Mammary epithelial cell (primary cell): ENCODE measurements at regions of chr17 and their contacts with region 1.

Region 1: DNA sequence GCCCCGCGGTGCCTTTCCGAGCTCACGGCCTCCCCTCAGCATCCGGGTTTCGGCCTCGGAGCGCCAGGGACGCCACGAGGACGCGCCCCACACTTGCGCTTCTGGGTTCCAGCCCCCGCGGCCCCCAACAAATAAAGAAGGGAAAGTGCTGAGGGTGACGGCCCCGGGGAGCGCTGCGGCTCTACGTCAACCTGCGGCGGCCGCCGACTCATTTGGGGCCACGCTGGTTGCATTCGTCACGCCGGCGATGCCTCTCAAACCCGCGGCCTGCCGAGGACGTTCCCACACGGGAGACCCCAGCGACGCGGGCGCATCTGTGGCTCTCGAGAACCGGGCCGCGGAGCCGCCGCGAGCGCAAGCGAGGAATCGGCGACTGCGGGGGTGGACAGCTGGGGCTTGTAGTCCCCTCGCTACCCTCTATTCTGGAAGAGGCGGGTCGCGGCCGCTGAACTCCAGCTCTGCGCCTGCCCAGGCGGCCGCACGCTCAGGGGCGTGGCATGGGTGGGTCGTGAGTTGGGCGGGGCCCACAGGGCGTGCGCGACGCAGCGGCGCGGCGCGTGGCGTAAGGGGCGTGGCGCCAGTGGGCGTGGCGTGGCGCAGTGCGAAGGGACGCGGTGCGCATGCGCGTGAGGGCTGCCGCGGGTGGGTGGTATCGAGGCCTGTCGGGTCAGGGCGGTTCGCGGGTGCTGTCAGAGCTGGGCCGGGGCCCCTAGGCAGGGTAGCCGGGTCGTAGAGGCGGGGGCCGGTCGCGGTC is at the start of gene AMZ2:
- DNase-seq: peak; percentile 91
- H3K4me3 ChIP-seq: peak within 1 kb of the TSS; percentile 67 to 93 (median 71)
- H3K27ac ChIP-seq: peak within 1 kb of the TSS; percentile 83
- H3K4me1 ChIP-seq: peaks cover 8% of the 10 kb centered on the region
- H3K27me3 ChIP-seq: no peaks in the 10 kb centered on the region
- CTCF ChIP-seq: no peak
- total RNA-seq, gene AMZ2: 96.4 to 124 TPM

Region 2: GRCh38 chr17:68205251-68205807 is 42.3 kb before region 1 on chr17:
- CTCF ChIA-PET with region 1: interaction called, 5 read pairs
- dilution Hi-C with region 1: no loop called
- in situ Hi-C with region 1: no loop called
- intact Hi-C with region 1: loop called (anchors 5 kb)
- DNase-seq: peak; percentile 76
- H3K4me3 ChIP-seq: peak overlapping the region; percentile 73 to 93 (median 82)
- H3K27ac ChIP-seq: peak overlapping the region; percentile 29
- H3K4me1 ChIP-seq: peaks cover 13% of the 10 kb centered on the region
- H3K27me3 ChIP-seq: no peaks in the 10 kb centered on the region
- CTCF ChIP-seq: peak; percentile 66 to 80

Region 3: DNA sequence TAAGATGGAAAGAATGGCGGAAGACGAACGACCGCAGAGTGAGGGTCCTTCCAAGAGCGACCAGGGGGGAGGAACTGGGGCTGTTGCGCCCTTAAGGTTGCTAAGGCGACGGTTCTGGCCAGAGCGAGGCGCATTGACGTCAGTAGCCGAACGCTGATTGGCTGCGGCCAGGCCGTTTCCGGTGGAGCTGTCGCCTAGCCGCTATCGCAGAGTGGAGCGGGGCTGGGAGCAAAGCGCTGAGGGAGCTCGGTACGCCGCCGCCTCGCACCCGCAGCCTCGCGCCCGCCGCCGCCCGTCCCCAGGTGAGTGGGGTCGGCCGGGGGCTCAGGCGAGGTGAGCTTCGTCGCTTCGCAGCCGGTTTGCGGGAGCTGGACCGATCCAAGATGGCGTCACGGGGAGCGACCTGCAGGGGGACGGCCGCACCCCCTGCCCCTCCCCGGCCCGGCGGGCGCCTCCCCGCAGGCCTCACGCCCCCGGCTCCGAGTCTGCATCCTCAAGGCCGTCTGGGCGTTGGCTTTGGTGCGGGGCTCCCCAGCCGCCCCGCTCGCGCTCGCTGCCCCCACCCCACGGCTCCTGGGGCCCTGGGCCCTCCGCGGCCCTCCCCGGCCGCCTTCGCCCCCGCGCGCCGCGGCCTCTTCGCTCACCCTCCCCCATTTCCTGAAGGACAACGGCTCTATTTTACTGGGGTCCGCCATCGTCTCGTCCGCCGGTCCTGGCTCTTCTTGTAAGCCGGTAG is 264.8 kb after region 1 on chr17 and contains the start of gene PRKAR1A:
- CTCF ChIA-PET with region 1: no interaction called
- dilution Hi-C with region 1: no loop called
- in situ Hi-C with region 1: no loop called
- intact Hi-C with region 1: loop called (anchors 5 kb)
- DNase-seq: peak; percentile 93
- H3K4me3 ChIP-seq: peak within 1 kb of the TSS; percentile 79 to 91 (median 88)
- H3K27ac ChIP-seq: peak within 1 kb of the TSS; percentile 95
- H3K4me1 ChIP-seq: peaks cover 33% of the 10 kb centered on the region
- H3K27me3 ChIP-seq: no peaks in the 10 kb centered on the region
- CTCF ChIP-seq: peak in 1 of 2 donors; percentile 9
- total RNA-seq, gene PRKAR1A: 253 to 261 TPM

Region 4: DNA sequence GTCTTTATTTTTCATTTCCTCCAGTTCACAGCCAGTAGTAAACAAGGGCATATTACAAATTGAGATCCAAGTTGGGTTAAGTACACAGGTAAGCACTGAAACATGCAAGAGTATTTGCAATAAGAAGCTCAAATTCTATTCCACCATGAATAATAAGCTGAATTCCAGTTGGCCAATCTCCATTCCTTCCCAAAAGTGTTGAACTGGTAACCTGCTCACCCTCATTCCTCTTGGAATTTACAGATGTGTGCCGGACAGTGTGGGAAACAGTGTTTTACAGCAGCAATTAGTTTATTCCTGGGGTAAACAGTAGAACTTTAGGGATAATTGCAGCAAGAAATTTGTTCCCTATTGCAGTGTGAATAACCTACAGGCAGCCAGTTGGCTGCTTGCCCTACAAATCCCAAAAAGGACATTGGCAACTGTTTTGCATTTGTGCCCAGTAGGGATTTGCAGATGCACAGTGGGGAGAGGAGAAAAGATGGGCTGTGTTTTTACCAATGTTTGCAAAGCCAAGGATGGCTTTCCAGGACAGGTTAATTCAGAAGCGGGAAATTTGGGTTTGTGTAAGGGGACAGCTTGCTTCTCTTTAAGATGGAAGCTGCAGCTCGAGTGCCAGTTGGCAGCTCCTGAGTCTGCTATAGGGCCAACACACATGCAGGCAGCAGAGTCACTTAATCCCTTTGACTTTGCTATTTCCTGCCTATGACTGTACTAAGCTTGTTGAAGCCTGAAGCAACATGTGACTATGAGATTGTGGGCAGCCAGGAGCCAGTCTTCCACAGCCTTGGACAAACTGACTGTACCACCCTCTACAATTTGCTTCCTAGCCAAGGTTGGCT is 1485.8 kb after region 1 on chr17:
- CTCF ChIA-PET with region 1: no interaction called
- dilution Hi-C with region 1: no loop called
- in situ Hi-C with region 1: no loop called
- intact Hi-C with region 1: no loop called
- DNase-seq: peak; percentile 93
- H3K4me3 ChIP-seq: no peak overlapping the region
- H3K27ac ChIP-seq: peak overlapping the region; percentile 53
- H3K4me1 ChIP-seq: peaks cover 43% of the 10 kb centered on the region
- H3K27me3 ChIP-seq: no peaks in the 10 kb centered on the region
- CTCF ChIP-seq: peak in 1 of 2 donors; percentile 6